GM18951 (cell line): ENCODE measurements at regions of chr3 and their contacts with region 1.

Region 1: DNA sequence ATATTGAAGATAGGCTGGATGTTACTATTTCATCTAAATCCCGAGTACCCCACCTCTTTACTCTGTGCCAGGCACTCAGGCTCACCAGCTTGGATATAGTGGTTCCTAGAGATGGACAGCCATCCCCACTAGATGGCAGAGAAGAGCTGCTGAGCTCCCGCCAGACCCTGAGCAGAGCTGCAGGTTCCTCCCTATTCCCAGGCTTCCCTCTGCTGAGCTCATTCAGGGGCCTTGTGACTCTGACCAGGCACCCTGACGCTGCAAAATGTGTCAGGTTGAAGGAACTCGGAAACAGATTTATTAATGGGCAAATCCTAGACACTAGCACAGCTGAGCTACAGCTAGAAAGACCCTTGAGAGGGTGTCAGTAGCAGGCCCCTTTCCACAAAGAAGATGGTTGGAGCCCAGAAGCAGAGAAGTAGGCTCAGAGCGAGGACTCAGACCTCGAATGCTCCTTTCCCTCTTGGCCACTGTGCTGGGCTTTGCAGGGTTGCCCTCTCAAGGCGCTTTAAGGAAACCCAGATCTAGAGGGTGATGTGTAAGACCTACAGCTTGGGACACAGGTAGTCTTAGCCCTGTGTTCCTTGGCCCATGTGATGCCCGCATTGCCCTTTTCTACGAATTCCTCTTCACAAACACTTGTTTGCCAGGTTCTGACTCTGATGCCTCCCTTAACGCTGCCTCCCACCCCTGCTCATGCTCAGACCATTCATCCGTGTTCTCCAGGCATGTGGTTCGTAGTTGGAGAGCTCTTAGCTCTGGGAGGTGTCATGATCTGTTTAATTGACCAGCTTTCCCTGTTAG is 38.0 kb upstream of the RHO start:
- POLR2A ChIP-seq: no peak

Region 2: DNA sequence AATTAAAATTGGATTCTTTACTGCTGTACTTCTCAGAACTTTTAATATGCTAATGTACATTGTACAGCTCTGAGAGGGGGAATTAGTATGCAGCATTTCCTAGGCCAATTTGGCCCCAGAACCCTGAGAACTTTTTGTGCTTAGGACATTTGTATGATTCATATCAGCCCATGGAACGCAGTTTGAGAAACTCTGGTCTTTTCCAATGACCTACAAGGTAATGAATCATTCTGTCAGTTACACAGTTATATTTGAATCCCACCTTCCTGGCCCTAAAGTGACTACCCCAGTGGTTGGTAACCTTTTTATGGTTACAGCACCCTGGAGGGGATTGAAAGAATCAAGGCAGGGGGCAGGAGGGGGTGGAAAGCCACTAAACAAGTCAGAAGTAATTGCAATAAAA is 1601.0 kb before region 1 on chr3:
- in situ Hi-C with region 1: no loop called
- POLR2A ChIP-seq: no peak

Region 3: DNA sequence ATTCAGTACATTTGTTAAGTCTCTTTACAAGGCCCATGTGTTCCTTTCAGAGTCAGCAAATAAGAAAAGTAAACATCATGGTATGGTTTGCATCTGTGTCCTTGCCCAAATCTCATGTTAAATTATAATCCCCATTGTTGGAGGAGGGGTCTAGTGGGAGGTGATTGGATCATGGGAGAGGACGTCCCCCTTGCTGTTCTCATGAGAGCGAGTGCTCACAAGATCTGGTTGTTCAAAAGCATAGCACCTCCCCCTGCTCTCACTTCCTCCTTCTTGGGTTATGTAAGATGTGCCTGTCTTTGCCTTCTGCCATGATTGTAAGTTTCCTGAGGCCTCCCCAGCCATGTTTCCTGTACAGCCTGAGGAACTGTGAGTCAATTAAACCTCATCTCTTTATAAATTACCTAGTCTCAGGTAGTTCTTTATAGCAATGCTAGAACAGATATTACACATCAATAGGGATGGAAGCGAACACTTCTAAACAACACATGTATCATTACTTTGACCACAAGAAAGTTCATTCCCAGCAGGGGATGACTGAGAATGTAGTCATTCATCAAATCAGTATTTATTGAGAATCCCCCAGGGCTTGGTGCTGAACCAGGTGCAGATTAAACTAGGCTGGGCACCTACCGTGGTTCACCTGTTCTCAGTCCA is 66.1 kb before region 1 on chr3:
- in situ Hi-C with region 1: no loop called
- POLR2A ChIP-seq: no peak

Region 4: DNA sequence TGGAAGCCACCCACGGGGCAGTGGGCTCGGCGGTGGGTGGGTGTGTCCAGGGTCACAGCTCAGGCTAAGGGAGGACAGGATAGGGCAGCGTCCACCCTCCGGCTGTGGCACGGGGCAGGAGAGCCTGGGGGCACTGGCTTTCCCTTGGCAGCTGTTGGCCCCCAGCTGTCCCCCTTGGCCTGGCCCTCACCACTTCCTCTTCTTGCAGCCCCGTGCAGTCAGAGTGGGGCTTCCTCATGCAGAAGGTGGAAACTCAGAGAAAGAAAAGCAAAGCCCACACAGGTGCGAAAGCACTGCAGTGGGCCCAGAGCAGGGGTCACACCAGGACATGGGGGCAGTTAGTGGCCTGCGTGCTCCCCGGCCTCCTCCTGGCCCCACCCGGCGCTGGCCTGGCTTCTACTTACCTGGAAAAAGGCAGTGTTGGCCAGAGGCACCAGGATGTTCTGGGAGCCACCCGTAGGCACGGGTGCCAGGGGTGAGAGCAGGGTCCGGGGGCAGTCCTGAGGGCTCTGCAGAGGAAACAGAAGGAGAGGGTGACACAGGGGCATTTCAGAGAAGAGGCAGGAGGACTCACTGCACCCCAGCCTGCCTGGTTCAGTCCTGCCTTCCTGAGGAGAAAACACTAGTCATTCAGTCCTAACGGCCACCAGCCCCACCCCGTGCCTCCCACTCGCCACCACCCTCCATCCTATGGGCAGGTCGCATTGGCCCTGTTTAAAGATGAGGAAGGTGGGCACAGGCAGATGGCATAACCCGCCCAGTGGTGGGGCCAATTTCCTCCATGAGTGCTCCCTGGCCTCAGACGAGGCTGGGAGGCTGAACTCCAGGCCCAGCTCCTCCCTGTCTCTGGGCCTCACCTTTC is 87.7 kb after region 1 on chr3:
- in situ Hi-C with region 1: no loop called
- POLR2A ChIP-seq: no peak

Region 5: DNA sequence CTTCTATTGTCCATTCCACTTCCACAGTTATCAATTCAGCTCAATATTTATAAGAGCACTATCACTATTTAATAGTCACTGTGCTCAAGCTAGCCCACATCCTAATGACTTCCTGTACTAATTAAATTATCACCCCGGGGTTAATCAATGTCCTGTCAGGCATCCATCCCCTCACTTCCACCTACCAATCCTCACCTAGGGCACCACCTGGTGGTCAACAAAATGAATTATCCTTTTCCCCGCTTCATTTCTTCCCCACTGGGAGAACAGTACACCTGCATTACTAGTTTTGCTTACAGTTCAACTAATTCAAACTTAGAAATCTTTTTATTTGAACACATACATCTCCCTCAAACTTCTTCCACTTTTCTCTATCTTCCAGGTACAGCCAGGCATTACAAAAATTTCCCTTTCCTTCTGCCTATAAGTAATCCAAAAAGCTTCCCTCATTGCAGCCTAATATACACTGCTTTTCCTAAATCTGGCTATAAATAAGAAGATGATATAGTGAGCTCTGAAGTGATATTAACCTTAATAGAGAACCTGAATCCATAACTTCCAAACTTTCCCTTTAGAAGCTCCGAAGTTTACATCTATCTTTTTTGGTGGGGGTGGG is 334.6 kb after region 1 on chr3:
- in situ Hi-C with region 1: loop called (anchors 25 kb)
- POLR2A ChIP-seq: no peak

Region 6: DNA sequence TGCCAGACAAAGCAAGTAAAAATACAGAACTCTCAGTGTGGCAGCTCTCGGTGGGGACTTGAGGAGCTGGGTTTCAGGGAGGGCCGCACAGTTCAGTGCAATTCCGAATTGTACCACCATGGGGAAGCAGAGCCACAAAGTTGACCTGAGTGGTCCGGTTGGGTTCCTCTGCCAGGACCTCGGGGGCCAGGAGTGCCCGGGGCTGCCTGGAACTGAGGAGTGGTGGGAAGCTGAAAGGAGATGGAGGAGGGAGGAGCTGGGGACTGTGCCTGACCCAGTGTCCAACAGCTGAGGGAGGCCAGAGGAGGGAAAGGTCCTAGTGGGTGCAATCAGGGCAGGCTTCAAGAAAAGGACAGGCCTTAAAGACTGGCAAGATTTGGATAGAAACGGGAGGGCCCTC is 451.9 kb after region 1 on chr3:
- in situ Hi-C with region 1: loop called (anchors 25 kb)
- POLR2A ChIP-seq: no peak

Region 7: DNA sequence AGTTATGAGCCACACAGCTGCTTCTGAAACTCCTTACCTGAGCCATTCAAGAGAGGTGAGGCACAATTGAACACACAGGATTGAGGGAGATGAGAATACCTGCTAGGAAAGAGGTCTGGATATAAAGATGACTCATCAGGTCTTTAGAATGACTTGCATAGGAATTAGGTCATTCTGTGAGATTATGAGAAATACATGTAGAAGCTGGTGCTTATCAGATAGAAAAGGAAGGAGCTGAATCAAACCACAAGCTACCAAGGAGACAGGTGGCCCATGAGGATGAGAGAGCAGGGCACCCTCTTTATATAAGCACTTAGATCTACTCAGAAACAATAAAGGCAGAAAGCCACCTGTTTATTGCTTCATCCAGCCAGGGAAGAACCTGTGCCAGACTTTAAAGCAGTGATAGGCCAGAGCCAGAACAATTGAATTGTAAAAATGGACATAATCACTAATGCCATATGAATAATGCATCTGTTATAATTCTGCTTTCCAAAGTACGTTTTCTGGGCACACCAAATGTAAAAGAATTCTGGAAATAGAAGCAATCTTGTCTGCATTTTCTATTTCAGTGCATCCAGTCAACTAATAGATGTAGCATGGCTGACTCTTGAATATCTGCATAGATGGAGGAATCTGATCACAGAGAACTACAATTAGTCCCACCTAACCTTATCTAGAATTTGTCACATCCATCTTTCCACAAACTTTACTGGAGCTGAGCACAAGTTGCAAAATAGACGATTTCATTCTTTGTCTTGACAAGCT is 1181.3 kb after region 1 on chr3:
- in situ Hi-C with region 1: no loop called
- POLR2A ChIP-seq: no peak